ENCODE measurements at regions of chr14 and their contacts with region 1.

Region 1: DNA sequence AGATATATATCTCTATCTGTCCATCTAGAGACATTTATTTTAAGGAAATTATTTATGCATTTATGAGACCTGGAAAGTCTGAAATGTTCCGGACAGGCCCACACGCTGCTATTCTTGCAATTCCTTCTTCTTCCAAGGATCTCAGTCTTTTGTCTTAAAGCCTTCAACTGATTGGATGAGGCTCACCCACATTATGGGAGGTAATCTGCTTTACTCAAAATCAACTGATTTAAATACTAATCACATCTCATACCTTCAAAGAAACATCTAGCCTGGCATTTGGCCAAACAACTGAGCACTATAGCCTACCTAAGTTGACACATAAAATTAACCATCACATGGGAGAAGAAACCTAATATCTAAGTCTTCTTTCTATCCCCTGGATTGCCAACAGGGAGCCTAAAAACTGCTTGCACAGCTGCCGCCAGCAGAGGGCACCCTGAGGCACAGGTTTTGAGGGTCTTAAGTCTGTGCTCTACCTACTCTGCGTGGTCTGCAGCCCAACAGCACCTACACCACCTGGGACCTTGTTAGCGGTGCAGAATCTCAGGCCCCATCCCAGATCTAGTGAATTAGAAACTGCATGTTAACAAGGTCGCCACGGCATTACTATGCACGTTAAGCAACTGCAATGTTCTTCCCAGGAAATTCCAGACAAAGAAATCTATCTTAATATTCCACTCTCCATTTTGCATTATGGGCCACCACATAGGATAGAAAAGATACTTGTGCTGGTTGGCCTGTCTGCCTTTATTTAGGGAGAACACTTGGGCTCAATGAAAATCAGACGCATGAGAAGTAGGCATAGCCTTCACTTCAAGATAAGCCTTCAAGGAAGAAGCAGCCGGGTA is 249.7 kb downstream of the FOXG1 start:
- DNase-seq: no peak
- ATAC-seq: no peak
- H3K4me3 ChIP-seq: no peak overlapping the region
- H3K27ac ChIP-seq: no peak overlapping the region
- H3K4me1 ChIP-seq: no peaks in the 10 kb centered on the region
- H3K27me3 ChIP-seq: no peaks in the 10 kb centered on the region
- CTCF ChIP-seq: peak in 7 of 12 donors; percentile 22 to 50 (median 37)
- POLR2A ChIP-seq: no peak

Region 2: GRCh38 chr14:28773861-28774691 is 242.2 kb before region 1 on chr14:
- intact Hi-C with region 1: no loop called
- DNase-seq: no peak
- ATAC-seq: no peak
- H3K4me3 ChIP-seq: no peak overlapping the region
- H3K27ac ChIP-seq: no peak overlapping the region
- H3K4me1 ChIP-seq: no peaks in the 10 kb centered on the region
- H3K27me3 ChIP-seq: peaks cover 32 to 100% (median 93%) of the 10 kb centered on the region in 9 donors
- CTCF ChIP-seq: no peak
- POLR2A ChIP-seq: no peak

Region 3: DNA sequence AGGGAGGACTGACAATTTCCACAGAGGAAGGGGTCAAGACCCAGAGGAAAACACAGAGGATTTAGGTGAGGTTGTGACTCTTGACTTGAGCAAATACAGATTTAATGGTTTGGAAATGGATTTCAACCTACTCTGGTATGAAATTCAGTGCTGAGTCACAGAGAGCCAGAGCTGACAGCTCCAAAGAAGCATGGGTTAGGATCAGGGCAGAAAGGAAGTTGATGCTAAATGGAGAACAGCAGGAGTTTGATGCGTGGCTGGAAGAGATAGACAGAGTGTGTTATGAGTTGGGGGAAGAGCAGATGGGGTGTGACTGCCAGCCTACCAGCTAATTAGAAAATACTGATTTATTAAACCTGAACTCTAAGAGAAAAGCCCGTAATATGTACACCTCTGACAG is 22.9 kb after region 1 on chr14:
- intact Hi-C with region 1: no loop called
- DNase-seq: no peak
- ATAC-seq: no peak
- H3K4me3 ChIP-seq: no peak overlapping the region
- H3K27ac ChIP-seq: no peak overlapping the region
- H3K4me1 ChIP-seq: no peaks in the 10 kb centered on the region
- H3K27me3 ChIP-seq: no peaks in the 10 kb centered on the region
- CTCF ChIP-seq: no peak
- POLR2A ChIP-seq: no peak

Region 4: DNA sequence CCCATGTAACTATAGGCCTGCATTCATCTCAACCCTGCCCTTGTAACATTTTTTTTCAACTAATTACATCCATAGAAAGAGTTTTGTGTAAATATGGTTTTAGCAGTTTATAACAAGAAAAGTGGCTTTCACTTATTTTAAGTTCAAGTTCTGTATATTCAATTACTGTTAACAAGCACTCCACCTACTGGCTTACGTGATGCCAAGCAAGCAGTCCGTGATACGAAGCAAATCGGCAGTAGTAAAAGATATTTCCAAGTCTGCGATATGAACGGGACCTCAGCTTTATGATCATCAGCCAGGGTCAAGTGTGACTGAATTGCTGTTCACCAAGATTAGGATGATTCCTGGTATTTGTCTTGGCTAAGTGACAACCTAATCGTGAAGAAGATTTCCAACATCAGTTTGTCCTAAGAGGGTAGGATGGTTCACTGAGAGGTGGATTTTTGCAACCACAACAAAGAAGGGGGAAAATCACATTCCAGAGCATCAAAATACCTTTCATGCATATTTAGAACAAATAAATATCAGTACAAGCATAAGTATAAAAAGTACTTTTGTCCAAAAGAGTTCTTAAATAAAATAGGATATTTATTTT is 206.5 kb after region 1 on chr14:
- intact Hi-C with region 1: loop called in 1 of 10 experiments (anchors 10 kb)
- DNase-seq: no peak
- ATAC-seq: no peak
- H3K4me3 ChIP-seq: no peak overlapping the region
- H3K27ac ChIP-seq: no peak overlapping the region
- H3K4me1 ChIP-seq: no peaks in the 10 kb centered on the region
- H3K27me3 ChIP-seq: peaks cover 0 to 6% (median 0%) of the 10 kb centered on the region in 9 donors
- CTCF ChIP-seq: peak in 7 of 12 donors; percentile 5 to 42 (median 16)
- POLR2A ChIP-seq: no peak

Measured in heart left ventricle (tissue), 16 donors.